Caco-2 (cell line): ENCODE measurements at regions of chr14 and their contacts with region 1.

Region 1: GRCh38 chr14:28751467-28752058 is 15.0 kb upstream of the FOXG1 start:
- DNase-seq: peak; percentile 49 to 55
- H3K4me3 ChIP-seq: no peak overlapping the region
- H3K4me3 Mint-ChIP-seq: no peak overlapping the region
- H3K27ac Mint-ChIP-seq: no peak overlapping the region
- H3K4me1 ChIP-seq: no peaks in the 10 kb centered on the region
- H3K4me1 Mint-ChIP-seq: no peaks in the 10 kb centered on the region
- H3K27me3 ChIP-seq: no peaks in the 10 kb centered on the region
- H3K27me3 Mint-ChIP-seq: peaks cover 14% of the 10 kb centered on the region
- CTCF ChIP-seq: peak; percentile 57 to 74

Region 2: GRCh38 chr14:28303248-28303647 is 448.3 kb before region 1 on chr14:
- CTCF ChIA-PET with region 1: no interaction called
- POLR2A ChIA-PET with region 1: no interaction called
- intact Hi-C with region 1: no loop called
- DNase-seq: no peak
- H3K4me3 ChIP-seq: no peak overlapping the region
- H3K4me3 Mint-ChIP-seq: no peak overlapping the region
- H3K27ac Mint-ChIP-seq: no peak overlapping the region
- H3K4me1 ChIP-seq: no peaks in the 10 kb centered on the region; the same call in 1 of the 2 replicates
- H3K4me1 Mint-ChIP-seq: no peaks in the 10 kb centered on the region
- H3K27me3 ChIP-seq: no peaks in the 10 kb centered on the region
- H3K27me3 Mint-ChIP-seq: no peaks in the 10 kb centered on the region
- CTCF ChIP-seq: no peak

Region 3: DNA sequence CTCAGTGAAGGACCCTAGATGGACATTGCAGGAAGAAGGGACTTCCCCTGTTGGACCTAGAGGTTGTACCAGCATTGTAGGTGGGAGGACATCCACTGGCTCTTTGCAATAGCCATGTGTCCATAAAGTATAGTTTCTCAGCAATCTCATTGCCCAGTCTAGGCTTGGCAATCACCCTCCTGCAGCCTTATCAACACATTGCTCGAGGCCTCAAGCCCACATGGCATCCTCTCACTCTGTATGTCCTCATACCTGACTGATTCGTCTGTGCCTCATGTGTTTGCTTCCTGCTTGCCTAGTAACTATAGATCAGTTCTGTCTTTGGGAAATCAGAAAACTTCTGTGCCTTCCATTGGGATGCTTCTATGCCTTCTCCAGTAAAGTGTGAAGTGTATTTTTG is 86.0 kb after region 1 on chr14:
- CTCF ChIA-PET with region 1: no interaction called
- POLR2A ChIA-PET with region 1: no interaction called
- intact Hi-C with region 1: no loop called
- DNase-seq: no peak
- H3K4me3 ChIP-seq: no peak overlapping the region
- H3K4me3 Mint-ChIP-seq: no peak overlapping the region
- H3K27ac Mint-ChIP-seq: no peak overlapping the region
- H3K4me1 ChIP-seq: no peaks in the 10 kb centered on the region
- H3K4me1 Mint-ChIP-seq: no peaks in the 10 kb centered on the region
- H3K27me3 ChIP-seq: no peaks in the 10 kb centered on the region
- H3K27me3 Mint-ChIP-seq: no peaks in the 10 kb centered on the region
- CTCF ChIP-seq: no peak

Region 4: GRCh38 chr14:29222671-29223268 is 471.2 kb after region 1 on chr14:
- CTCF ChIA-PET with region 1: no interaction called
- POLR2A ChIA-PET with region 1: no interaction called
- intact Hi-C with region 1: loop called (anchors 1 kb)
- DNase-seq: peak; percentile 23 to 27
- H3K4me3 ChIP-seq: no peak overlapping the region
- H3K4me3 Mint-ChIP-seq: no peak overlapping the region
- H3K27ac Mint-ChIP-seq: no peak overlapping the region
- H3K4me1 ChIP-seq: no peaks in the 10 kb centered on the region
- H3K4me1 Mint-ChIP-seq: no peaks in the 10 kb centered on the region
- H3K27me3 ChIP-seq: no peaks in the 10 kb centered on the region
- H3K27me3 Mint-ChIP-seq: peaks cover 5% of the 10 kb centered on the region
- CTCF ChIP-seq: peak; percentile 36 to 62

Region 5: DNA sequence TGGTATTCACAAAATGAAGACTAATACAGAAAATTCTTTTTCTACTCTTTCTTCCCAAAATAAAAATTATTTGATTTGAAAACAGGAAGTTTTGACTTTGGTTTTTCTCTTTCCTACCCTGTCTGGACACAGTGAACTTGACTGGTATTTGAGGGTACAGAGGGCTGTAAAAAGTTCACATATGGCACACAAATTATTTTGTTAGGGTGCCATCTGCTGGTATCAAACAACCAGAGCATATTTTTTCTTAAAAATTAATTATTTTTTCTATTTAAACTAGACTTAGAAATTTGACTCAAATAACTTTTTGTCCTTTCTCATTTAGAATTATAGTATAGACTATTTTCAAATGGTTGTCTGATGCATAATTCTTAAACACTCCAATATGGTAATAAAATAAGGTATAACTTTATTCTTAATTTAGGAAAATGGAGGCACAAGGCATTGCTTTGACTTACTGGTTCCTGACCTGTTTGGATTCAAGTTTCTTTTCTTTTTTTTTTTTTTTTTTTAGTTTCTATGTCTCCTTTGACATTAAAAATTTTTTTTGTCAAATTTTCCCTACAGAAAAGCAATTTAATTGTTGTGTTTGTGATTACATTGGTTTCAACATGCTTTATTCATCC is 785.4 kb after region 1 on chr14:
- CTCF ChIA-PET with region 1: interaction called, 3 read pairs
- POLR2A ChIA-PET with region 1: no interaction called
- intact Hi-C with region 1: loop called (anchors 1 kb)
- DNase-seq: no peak
- H3K4me3 ChIP-seq: no peak overlapping the region
- H3K4me3 Mint-ChIP-seq: no peak overlapping the region
- H3K27ac Mint-ChIP-seq: no peak overlapping the region
- H3K4me1 ChIP-seq: no peaks in the 10 kb centered on the region
- H3K4me1 Mint-ChIP-seq: no peaks in the 10 kb centered on the region
- H3K27me3 ChIP-seq: no peaks in the 10 kb centered on the region; the same call in 1 of the 2 replicates
- H3K27me3 Mint-ChIP-seq: peaks cover 5% of the 10 kb centered on the region
- CTCF ChIP-seq: peak; percentile 23 to 24

Region 6: DNA sequence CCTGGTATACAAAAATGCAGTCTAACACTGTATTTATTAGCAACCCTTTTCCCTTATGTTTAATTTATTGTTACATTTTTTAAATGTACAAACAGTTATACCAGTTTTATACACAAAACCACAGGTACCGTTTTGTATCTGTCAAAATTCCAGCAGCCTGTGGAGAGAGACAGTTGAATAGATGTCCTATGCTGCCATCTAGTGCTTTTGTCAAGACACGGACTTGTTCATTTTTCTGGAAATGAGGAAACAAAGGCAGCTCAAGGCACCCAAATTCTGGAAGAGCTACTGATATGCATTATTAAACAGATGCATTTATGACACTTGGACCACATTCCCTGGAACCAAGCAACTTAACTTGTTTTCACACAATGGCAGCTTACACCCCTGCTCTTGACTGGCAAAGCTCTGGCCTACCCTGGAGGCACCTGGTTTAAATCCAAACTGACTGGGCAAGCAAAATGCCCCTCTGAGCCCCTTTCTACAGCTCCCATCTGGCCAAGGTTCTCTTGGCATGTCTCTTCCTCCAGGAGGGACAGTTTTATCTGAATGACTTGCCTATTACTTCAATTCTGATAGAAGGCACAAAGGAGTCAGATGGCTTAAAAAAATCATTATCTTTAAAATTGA is 1463.0 kb after region 1 on chr14:
- CTCF ChIA-PET with region 1: no interaction called
- POLR2A ChIA-PET with region 1: no interaction called
- intact Hi-C with region 1: loop called (anchors 1 kb)
- DNase-seq: peak in 1 of 2 experiments; percentile 32
- H3K4me3 ChIP-seq: no peak overlapping the region
- H3K4me3 Mint-ChIP-seq: no peak overlapping the region
- H3K27ac Mint-ChIP-seq: no peak overlapping the region
- H3K4me1 ChIP-seq: no peaks in the 10 kb centered on the region
- H3K4me1 Mint-ChIP-seq: no peaks in the 10 kb centered on the region
- H3K27me3 ChIP-seq: no peaks in the 10 kb centered on the region
- H3K27me3 Mint-ChIP-seq: peaks cover under 1% of the 10 kb centered on the region
- CTCF ChIP-seq: peak; percentile 32 to 63